GM12878 (cell line): ENCODE measurements at regions of chr4 and their contacts with region 1.

Region 1: DNA sequence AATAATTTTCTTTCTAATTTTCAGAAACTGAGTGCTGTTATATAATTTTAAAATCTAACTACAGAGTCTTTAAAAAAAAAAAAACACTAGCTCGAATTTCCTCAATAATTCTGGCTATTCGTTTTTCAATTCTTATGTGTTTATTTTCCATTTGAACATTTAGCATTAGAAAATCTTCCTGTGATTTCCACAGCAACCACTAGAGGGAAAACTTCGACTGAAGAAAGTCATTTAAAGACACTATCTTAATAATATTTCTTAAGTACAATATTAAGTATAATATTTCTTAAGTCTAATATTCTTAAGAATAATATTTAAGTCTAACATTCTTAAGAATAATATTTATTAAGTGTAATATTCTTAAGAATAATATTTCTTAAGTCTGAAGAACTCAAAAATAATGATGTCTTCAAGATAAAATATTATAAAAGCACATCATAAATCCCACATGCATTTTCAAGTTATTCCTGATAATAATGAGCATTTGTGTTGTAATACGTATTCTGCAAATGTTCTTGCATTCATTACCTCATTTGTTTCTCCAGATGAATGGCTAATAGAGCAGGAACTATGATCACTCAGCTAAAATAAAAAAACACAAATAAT is 118.4 kb upstream of the WDR17 start:
- DNase-seq: no peak
- ATAC-seq: 0 out of 3 replicates have a peak, but pooled peaks have one; percentile 38
- H3K4me3 ChIP-seq: no peak overlapping the region
- H3K27ac ChIP-seq: no peak overlapping the region
- H3K4me1 ChIP-seq: no peaks in the 10 kb centered on the region
- H3K27me3 ChIP-seq: peaks cover 0 to 3% of the 10 kb centered on the region in 2 experiments; a peak in 1 of 4 replicates
- CTCF ChIP-seq: peak in 2 of 3 experiments; percentile 43 to 47; a peak in 3 of 6 replicates
- EP300 ChIP-seq: no peak
- POLR2A ChIP-seq: no peak
- RAD21 ChIP-seq: peak; percentile 69

Region 2: GRCh38 chr4:176054942-176055341 is 107.7 kb after region 1 on chr4:
- CTCF ChIA-PET with region 1: interaction called, 30 read pairs
- POLR2A ChIA-PET with region 1: no interaction called
- RAD21 ChIA-PET with region 1: interaction called, 8 read pairs
- SMC1A ChIA-PET with region 1: interaction called, 5 read pairs
- in situ Hi-C with region 1: no loop called
- intact Hi-C with region 1: no loop called
- DNase-seq: no peak
- ATAC-seq: peak; percentile 51
- H3K4me3 ChIP-seq: no peak overlapping the region
- H3K27ac ChIP-seq: no peak overlapping the region
- H3K4me1 ChIP-seq: peaks cover 11% of the 10 kb centered on the region
- H3K27me3 ChIP-seq: no peaks in the 10 kb centered on the region
- CTCF ChIP-seq: peak in 2 of 3 experiments; percentile 28 to 37; a peak in 3 of 6 replicates
- EP300 ChIP-seq: no peak
- POLR2A ChIP-seq: no peak
- RAD21 ChIP-seq: peak; percentile 50

Region 3: GRCh38 chr4:176123710-176124407 is 176.6 kb after region 1 on chr4:
- CTCF ChIA-PET with region 1: interaction called, 4 read pairs
- POLR2A ChIA-PET with region 1: no interaction called
- RAD21 ChIA-PET with region 1: no interaction called
- SMC1A ChIA-PET with region 1: no interaction called
- in situ Hi-C with region 1: no loop called
- intact Hi-C with region 1: loop called (anchors 2 kb)
- DNase-seq: peak; percentile 51
- ATAC-seq: peak; percentile 99
- H3K4me3 ChIP-seq: 0 out of 2 replicates have a peak overlapping the region, but pooled peaks have one; percentile 1
- H3K27ac ChIP-seq: no peak overlapping the region
- H3K4me1 ChIP-seq: peaks cover 7% of the 10 kb centered on the region
- H3K27me3 ChIP-seq: no peaks in the 10 kb centered on the region
- CTCF ChIP-seq: peak; percentile 47 to 80 (median 67)
- EP300 ChIP-seq: peak; percentile 71 to 78; a peak in 3 of 4 replicates
- POLR2A ChIP-seq: no peak
- RAD21 ChIP-seq: peak; percentile 33

Region 4: GRCh38 chr4:176277162-176277904 is 330.1 kb after region 1 on chr4:
- CTCF ChIA-PET with region 1: interaction called, 9 read pairs
- POLR2A ChIA-PET with region 1: no interaction called
- RAD21 ChIA-PET with region 1: no interaction called
- SMC1A ChIA-PET with region 1: no interaction called
- in situ Hi-C with region 1: no loop called
- intact Hi-C with region 1: loop called (anchors 2 kb)
- DNase-seq: no peak
- ATAC-seq: peak; percentile 91
- H3K4me3 ChIP-seq: no peak overlapping the region
- H3K27ac ChIP-seq: no peak overlapping the region
- H3K4me1 ChIP-seq: no peaks in the 10 kb centered on the region
- H3K27me3 ChIP-seq: peaks cover under 1 to 3% of the 10 kb centered on the region in 2 experiments; a peak in 3 of 4 replicates
- CTCF ChIP-seq: peak; percentile 37 to 43 (median 38); a peak in 5 of 6 replicates
- EP300 ChIP-seq: no peak
- POLR2A ChIP-seq: no peak
- RAD21 ChIP-seq: peak; percentile 60

Region 5: GRCh38 chr4:176745902-176746301 is 798.7 kb after region 1 on chr4:
- CTCF ChIA-PET with region 1: no interaction called
- POLR2A ChIA-PET with region 1: no interaction called
- RAD21 ChIA-PET with region 1: no interaction called
- SMC1A ChIA-PET with region 1: no interaction called
- in situ Hi-C with region 1: no loop called
- intact Hi-C with region 1: no loop called
- DNase-seq: no peak
- ATAC-seq: no peak
- H3K4me3 ChIP-seq: no peak overlapping the region
- H3K27ac ChIP-seq: no peak overlapping the region
- H3K4me1 ChIP-seq: no peaks in the 10 kb centered on the region
- H3K27me3 ChIP-seq: no peaks in the 10 kb centered on the region
- CTCF ChIP-seq: no peak
- EP300 ChIP-seq: no peak
- POLR2A ChIP-seq: no peak
- RAD21 ChIP-seq: no peak